CD8-positive, alpha-beta T cell (primary cell): ENCODE measurements at regions of chr12 and their contacts with region 1.

Region 1: GRCh38 chr12:8890313-8891085 is 23.8 kb upstream of the PHC1 start:
- DNase-seq: peak; percentile 30 to 77 (median 55)
- ATAC-seq: peak; percentile 90
- H3K4me3 ChIP-seq: peak overlapping the region; percentile 44 to 55
- H3K4me3 Mint-ChIP-seq: peak overlapping the region; percentile 88
- H3K27ac ChIP-seq: peak overlapping the region in 1 of 2 experiments; percentile 26
- H3K27ac Mint-ChIP-seq: peak overlapping the region; percentile 66
- H3K4me1 ChIP-seq: no peaks in the 10 kb centered on the region
- H3K4me1 Mint-ChIP-seq: peaks cover 4% of the 10 kb centered on the region
- H3K27me3 ChIP-seq: no peaks in the 10 kb centered on the region
- H3K27me3 Mint-ChIP-seq: peaks cover 2% of the 10 kb centered on the region
- CTCF ChIP-seq: peak; percentile 94

Region 2: DNA sequence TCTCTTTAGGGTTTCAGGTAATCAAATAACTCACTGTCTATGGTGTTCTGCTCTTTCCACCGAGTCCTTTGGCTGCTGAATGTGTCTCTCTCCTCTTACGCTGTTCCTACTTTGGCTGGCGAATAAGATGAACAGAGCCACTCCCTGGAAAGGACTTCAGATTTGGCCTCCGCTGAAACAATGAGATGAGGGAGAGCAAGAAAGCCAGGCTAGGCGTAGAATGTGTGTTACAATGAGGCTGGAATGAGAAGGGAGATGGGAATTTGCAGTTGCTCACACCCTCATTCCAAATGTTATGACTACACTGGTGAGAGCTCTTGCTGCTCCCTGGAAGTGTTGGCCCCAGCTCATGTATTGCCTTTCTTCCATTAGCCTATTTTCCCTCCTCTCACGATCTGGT is 227.9 kb before region 1 on chr12 and contains the start of gene MFAP5:
- CTCF ChIA-PET with region 1: interaction called, 16 read pairs
- POLR2A ChIA-PET with region 1: no interaction called
- intact Hi-C with region 1: loop called in 1 of 2 experiments (anchors 1 kb)
- DNase-seq: no peak
- ATAC-seq: no peak
- H3K4me3 ChIP-seq: no peak within 1 kb of the TSS
- H3K4me3 Mint-ChIP-seq: no peak within 1 kb of the TSS
- H3K27ac ChIP-seq: no peak within 1 kb of the TSS
- H3K27ac Mint-ChIP-seq: no peak within 1 kb of the TSS
- H3K4me1 ChIP-seq: no peaks in the 10 kb centered on the region
- H3K4me1 Mint-ChIP-seq: no peaks in the 10 kb centered on the region
- H3K27me3 ChIP-seq: no peaks in the 10 kb centered on the region
- H3K27me3 Mint-ChIP-seq: peaks cover 7% of the 10 kb centered on the region
- CTCF ChIP-seq: no peak
- total RNA-seq, gene MFAP5: not detected

Region 3: GRCh38 chr12:8687846-8688601 is 202.5 kb before region 1 on chr12:
- CTCF ChIA-PET with region 1: interaction called, 17 read pairs
- POLR2A ChIA-PET with region 1: no interaction called
- intact Hi-C with region 1: loop called in 1 of 2 experiments (anchors 1 kb)
- DNase-seq: peak in 2 of 9 experiments; percentile 7 to 29
- ATAC-seq: no peak
- H3K4me3 ChIP-seq: no peak overlapping the region
- H3K4me3 Mint-ChIP-seq: no peak overlapping the region
- H3K27ac ChIP-seq: no peak overlapping the region
- H3K27ac Mint-ChIP-seq: no peak overlapping the region
- H3K4me1 ChIP-seq: peaks cover 7% of the 10 kb centered on the region
- H3K4me1 Mint-ChIP-seq: peaks cover 8% of the 10 kb centered on the region
- H3K27me3 ChIP-seq: no peaks in the 10 kb centered on the region
- H3K27me3 Mint-ChIP-seq: no peaks in the 10 kb centered on the region
- CTCF ChIP-seq: no peak

Region 4: DNA sequence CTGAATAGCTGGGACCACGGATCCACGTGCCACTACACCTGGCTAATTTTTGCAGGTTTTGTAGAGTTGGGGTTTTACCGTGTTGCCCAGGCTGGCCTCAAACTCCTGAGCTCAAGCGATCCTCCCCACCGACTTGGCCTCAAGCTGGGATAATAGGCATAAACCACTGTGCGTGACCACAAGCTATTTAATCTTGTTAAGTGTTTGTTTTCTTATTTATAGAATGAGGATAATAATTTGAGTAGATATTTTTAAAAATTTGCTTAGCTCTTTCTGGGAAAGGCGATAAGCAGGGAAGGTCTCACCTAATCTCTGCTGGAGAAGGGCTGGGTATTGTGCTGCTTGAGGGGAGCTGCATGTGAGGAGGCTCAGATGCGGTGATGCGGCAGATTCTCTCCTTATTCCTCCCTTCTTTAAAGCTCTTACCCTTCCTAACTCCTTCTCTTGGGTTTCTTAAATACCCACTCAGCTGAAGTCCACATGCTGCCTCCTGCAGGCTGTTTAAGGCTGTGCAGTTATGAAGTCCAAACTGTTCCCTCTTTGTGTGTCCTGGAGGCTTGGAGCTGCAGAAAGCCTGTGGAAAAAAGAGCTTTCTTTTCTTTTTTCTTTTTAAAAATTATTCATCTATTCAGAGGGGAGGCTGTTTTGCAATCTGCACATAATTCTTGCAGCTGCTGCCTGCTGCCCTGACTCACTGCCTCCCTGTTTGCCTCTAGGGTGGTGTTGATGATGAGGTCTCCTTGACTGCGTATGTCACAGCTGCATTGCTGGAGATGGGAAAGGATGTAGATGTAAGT is 30.1 kb before region 1 on chr12:
- CTCF ChIA-PET with region 1: interaction called, 14 read pairs
- POLR2A ChIA-PET with region 1: no interaction called
- intact Hi-C with region 1: no loop called
- DNase-seq: peak in 8 of 9 experiments; percentile 10 to 64 (median 29)
- ATAC-seq: peak; percentile 51
- H3K4me3 ChIP-seq: no peak overlapping the region
- H3K4me3 Mint-ChIP-seq: no peak overlapping the region
- H3K27ac ChIP-seq: no peak overlapping the region
- H3K27ac Mint-ChIP-seq: no peak overlapping the region
- H3K4me1 ChIP-seq: no peaks in the 10 kb centered on the region
- H3K4me1 Mint-ChIP-seq: no peaks in the 10 kb centered on the region
- H3K27me3 ChIP-seq: no peaks in the 10 kb centered on the region
- H3K27me3 Mint-ChIP-seq: no peaks in the 10 kb centered on the region
- CTCF ChIP-seq: peak; percentile 53

Region 5: DNA sequence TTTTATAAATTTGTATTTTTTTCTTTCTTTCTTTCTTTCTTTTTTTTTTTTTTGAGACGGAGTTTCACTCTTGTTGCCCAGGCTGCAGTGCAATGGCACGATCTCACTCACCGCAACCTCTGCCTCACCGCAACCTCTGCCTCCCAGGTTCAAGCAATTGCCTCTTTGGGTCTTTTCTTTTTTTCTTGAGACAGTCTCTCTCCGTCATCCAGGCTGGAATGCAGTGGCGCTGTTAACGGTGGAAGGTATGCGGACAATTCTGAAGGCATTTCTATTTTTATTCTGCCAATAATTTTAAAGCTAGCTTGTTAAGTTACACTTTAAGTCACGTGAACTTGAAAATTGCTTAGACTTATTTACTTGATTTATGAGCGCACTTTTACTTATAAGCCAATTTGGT is 15.0 kb after region 1 on chr12:
- CTCF ChIA-PET with region 1: interaction called, 11 read pairs
- POLR2A ChIA-PET with region 1: no interaction called
- intact Hi-C with region 1: no loop called
- DNase-seq: no peak
- ATAC-seq: no peak
- H3K4me3 ChIP-seq: no peak overlapping the region
- H3K4me3 Mint-ChIP-seq: no peak overlapping the region
- H3K27ac ChIP-seq: no peak overlapping the region
- H3K27ac Mint-ChIP-seq: no peak overlapping the region
- H3K4me1 ChIP-seq: no peaks in the 10 kb centered on the region
- H3K4me1 Mint-ChIP-seq: no peaks in the 10 kb centered on the region
- H3K27me3 ChIP-seq: no peaks in the 10 kb centered on the region
- H3K27me3 Mint-ChIP-seq: peaks cover 3% of the 10 kb centered on the region
- CTCF ChIP-seq: no peak

Region 6: DNA sequence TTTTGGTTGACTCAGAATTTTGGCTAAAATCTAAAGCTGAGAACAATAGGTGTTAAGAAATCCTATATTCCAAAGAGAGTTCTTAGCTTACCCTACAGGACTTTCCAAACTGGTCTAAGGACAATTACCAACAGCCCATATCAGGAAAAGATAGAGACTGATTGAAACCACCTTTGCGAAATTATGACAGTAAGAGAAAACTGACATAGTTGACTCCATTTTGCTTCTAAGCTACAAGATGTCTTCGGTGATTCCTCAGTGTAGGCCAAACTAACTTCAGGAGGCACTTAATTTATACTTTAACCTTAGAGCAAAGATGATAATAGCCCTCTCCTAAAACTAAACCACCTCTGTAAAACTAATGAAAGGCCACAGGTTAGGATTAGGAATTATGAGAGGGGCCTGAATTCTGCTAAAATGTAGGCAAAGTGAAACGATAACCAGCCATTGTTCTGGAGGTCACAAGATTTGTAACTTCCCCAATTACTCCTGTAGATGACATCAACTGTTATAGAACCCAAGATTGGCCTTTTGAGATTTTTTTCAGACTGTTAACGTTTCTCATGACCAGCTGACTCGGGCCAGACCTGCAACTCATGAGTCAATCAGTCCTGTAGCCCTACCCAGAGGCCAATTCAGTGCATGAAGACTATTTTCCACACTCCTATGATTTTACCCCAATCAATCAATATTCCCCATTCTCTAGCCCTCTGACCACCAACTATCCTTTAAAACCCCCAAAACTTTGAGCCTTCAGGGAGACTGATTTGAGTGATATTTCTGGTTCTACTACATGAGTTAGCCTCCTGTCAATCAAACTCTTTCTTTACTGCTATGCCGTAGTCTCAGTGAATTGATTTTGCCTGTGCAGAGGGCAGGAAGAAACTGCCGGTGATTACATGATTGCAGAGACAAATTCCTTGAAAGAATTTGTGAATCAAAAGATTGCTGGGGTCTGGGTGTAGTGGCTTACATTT is 142.0 kb after region 1 on chr12:
- CTCF ChIA-PET with region 1: interaction called, 15 read pairs
- POLR2A ChIA-PET with region 1: no interaction called
- intact Hi-C with region 1: no loop called
- DNase-seq: no peak
- ATAC-seq: no peak
- H3K4me3 ChIP-seq: no peak overlapping the region
- H3K4me3 Mint-ChIP-seq: no peak overlapping the region
- H3K27ac ChIP-seq: peak overlapping the region in 1 of 2 experiments; percentile 2
- H3K27ac Mint-ChIP-seq: peak overlapping the region; percentile 38
- H3K4me1 ChIP-seq: peaks cover 49% of the 10 kb centered on the region
- H3K4me1 Mint-ChIP-seq: peaks cover 66% of the 10 kb centered on the region
- H3K27me3 ChIP-seq: no peaks in the 10 kb centered on the region
- H3K27me3 Mint-ChIP-seq: no peaks in the 10 kb centered on the region
- CTCF ChIP-seq: no peak

Region 7: DNA sequence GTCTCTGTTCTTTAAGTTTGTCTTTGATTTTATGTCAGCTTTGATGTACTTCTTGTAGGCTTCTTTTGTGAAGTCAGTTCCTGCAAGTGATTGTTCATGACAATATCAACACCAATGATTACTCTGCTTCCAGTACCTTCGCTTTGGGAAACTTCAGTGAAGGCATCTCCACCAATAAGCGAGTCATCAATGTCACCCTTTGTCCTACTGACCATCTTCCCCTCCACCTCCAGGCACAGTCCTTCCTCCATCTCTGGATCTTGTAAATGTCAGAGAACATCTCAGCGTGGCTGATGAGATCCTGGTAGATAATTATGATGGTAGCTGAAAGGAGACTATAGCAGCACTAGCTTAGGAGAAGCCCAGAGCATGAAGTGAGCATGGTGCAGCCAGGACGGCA is 265.6 kb after region 1 on chr12:
- CTCF ChIA-PET with region 1: no interaction called
- POLR2A ChIA-PET with region 1: no interaction called
- intact Hi-C with region 1: no loop called
- DNase-seq: no peak
- ATAC-seq: no peak
- H3K4me3 ChIP-seq: no peak overlapping the region
- H3K4me3 Mint-ChIP-seq: no peak overlapping the region
- H3K27ac ChIP-seq: no peak overlapping the region
- H3K27ac Mint-ChIP-seq: no peak overlapping the region
- H3K4me1 ChIP-seq: no peaks in the 10 kb centered on the region
- H3K4me1 Mint-ChIP-seq: peaks cover 4% of the 10 kb centered on the region
- H3K27me3 ChIP-seq: no peaks in the 10 kb centered on the region
- H3K27me3 Mint-ChIP-seq: no peaks in the 10 kb centered on the region
- CTCF ChIP-seq: no peak